ENCODE measurements at regions of chr9 and their contacts with region 1.

Region 1: DNA sequence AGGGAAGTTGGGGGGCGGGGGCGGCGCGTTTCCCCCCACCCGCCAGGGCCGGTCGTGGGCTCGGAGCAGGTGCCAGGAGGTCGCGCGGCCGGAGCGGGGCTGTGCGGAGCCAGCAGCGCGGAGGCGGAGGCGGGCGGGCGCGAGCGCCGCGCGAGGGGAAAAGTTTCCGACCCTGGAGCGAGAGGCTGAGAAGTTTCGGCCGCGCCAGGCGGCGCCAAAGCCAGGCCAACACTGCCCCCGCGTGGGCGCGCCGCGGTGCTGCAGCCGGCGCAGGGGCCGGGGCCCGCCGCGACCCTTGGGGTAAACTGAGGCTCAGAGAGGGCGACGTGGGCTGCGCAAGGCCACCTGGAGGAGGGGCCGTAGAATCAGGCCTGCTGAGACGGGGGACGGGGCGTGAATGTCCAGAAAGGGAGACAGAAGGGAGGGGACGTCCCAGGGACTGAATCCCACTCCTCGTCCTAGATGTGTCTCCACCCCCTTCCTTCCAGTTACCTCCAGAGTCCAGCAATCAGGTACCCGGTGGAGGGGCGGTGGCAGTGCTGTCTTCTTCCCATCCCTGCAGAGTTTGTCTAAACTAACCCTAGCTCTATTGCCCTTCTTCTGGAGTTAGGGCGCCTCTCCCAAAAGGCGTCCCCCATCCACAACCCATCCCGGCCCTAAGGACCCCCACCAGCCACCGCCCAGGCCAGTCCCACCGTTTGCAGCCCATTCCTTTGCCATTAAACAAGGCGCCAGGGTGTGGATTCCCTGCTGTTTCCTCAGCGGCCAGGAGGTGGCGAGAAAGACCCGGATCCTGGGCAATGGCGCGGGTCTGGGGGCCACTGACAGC is 10.2 kb downstream of the C9orf50 start:
- DNase-seq: peak; percentile 37
- H3K4me3 ChIP-seq: peak overlapping the region; percentile 52 to 62 (median 55)
- H3K27ac ChIP-seq: no peak overlapping the region
- H3K4me1 ChIP-seq: peaks cover 22% of the 10 kb centered on the region
- H3K27me3 ChIP-seq: no peaks in the 10 kb centered on the region
- CTCF ChIP-seq: peak; percentile 80 to 81

Region 2: GRCh38 chr9:129131300-129132145 is 479.2 kb before region 1 on chr9:
- CTCF ChIA-PET with region 1: no interaction called
- dilution Hi-C with region 1: no loop called
- in situ Hi-C with region 1: loop called in 1 of 2 experiments (anchors 5 kb)
- intact Hi-C with region 1: loop called (anchors 2 kb)
- DNase-seq: peak; percentile 50
- H3K4me3 ChIP-seq: no peak overlapping the region
- H3K27ac ChIP-seq: no peak overlapping the region
- H3K4me1 ChIP-seq: no peaks in the 10 kb centered on the region
- H3K27me3 ChIP-seq: no peaks in the 10 kb centered on the region
- CTCF ChIP-seq: peak; percentile 99

Region 3: DNA sequence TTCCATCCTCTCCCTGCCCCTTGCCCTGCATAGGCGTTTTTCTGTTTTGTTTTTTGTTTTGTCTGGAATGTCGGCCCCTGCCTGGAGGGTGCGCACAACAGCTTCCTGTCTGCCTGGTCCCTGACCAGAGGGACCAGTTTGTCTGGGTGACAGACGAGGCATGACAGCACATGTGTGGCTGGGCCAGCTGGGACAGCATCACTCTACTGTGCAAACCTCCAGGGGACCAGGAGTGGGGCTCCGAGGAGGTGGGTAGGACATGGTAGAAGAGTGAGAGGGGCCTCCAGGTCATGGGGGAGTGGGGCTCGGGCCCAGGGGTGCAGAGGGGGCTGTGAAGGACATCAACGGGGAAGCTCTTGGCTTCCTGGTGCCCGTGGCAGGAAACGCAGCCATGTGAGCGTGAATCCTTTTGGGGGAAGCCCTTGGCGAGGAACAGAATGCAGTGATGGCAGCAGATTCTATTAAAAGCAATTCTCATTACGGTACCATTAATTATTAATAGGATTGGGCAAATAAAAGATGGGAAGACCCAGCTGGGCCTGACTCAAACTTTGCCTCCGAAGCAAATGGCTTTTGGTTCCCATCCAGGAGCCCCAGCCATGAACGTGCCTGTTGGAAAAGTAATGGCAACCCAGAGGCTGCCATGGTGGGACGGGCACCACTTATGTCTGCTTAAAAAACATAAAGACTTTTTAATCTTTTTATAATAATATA is 248.2 kb before region 1 on chr9:
- CTCF ChIA-PET with region 1: interaction called, 3 read pairs
- dilution Hi-C with region 1: no loop called
- in situ Hi-C with region 1: no loop called
- intact Hi-C with region 1: loop called (anchors 1 kb)
- DNase-seq: peak; percentile 27
- H3K4me3 ChIP-seq: no peak overlapping the region
- H3K27ac ChIP-seq: no peak overlapping the region
- H3K4me1 ChIP-seq: peaks cover 9% of the 10 kb centered on the region
- H3K27me3 ChIP-seq: no peaks in the 10 kb centered on the region
- CTCF ChIP-seq: peak in 1 of 2 donors; percentile 41

Region 4: DNA sequence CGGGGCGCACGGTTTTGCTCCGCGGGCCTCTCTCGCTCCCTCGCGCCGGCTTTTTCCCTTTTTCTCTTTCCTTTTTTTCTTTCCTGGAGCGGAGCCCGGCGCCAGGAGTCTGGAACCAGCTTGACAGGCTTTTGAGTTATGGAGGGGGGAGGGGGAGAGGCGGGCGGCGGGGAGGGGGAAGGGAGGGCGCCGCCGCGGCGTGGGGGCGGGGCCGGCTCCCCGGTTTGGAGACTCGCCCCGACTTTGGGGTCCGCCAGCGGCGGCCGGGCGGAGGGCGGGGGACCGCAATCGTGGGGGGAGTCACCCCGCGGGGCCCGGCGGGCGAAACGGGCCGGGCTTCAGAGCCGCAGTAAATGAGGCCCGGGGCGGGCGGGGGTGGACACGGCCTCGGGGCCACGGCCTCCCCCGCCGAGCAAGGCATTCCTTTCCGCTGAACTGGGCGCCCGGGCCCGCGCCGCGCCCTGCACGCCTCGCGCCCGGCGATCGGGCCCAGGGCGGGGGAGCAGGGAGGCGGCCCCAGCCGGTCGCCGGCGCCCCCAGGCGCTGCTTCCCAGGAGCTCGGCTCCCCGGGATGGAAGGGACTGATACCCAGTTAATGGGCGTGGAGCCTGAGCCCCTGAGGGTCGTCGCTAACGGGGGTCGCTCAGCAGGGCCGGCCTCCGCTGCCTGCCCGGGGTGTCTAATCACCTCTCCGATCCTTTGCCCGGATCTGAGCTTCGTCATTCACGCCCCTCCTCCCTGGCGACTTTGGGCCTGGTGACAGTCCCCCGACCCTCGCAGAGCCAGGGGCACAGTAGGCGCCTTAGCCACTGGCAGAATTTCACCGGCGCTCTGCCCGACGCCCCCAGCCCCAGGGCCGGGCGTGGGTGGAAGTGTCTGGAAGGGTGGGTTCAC is 127.9 kb before region 1 on chr9:
- CTCF ChIA-PET with region 1: no interaction called
- dilution Hi-C with region 1: no loop called
- in situ Hi-C with region 1: no loop called
- intact Hi-C with region 1: loop called (anchors 5 kb)
- DNase-seq: peak; percentile 80
- H3K4me3 ChIP-seq: peak overlapping the region; percentile 29 to 46 (median 32)
- H3K27ac ChIP-seq: peak overlapping the region; percentile 95
- H3K4me1 ChIP-seq: peaks cover 43% of the 10 kb centered on the region
- H3K27me3 ChIP-seq: no peaks in the 10 kb centered on the region
- CTCF ChIP-seq: no peak

Region 5: GRCh38 chr9:129524582-129525270 is 86.0 kb before region 1 on chr9:
- CTCF ChIA-PET with region 1: no interaction called
- dilution Hi-C with region 1: no loop called
- in situ Hi-C with region 1: no loop called
- intact Hi-C with region 1: no loop called
- DNase-seq: no peak
- H3K4me3 ChIP-seq: no peak overlapping the region
- H3K27ac ChIP-seq: no peak overlapping the region
- H3K4me1 ChIP-seq: peaks cover 3% of the 10 kb centered on the region
- H3K27me3 ChIP-seq: no peaks in the 10 kb centered on the region
- CTCF ChIP-seq: no peak

Measured in mammary epithelial cell (primary cell).